Activated naive CD4-positive, alpha-beta T cell treated with anti-CD3 and anti-CD28 coated beads for 36 hours (primary cell): ENCODE measurements at regions of chr4 and their contacts with region 1.

Region 1: DNA sequence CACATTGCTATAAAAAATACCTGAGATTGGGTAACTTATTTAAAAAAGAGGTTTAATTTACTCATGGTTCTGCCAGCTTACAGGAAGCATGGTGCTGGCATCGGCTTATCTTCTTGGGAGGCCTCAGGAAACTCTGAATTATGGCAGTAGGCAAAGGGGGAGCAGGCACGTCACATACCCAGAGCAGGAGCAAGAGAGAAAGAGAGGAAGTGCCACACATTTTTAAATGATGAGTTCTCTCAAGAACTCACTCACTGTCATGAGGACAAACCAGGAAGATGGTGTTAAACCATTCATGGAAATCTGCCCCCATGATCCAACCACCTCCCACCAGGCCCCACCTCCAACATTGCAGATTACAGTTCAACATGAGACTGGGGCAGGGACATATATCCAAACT is 10.0 kb upstream of the AFF1 start:
- DNase-seq: no peak
- H3K4me3 Mint-ChIP-seq: no peak overlapping the region
- H3K27ac Mint-ChIP-seq: no peak overlapping the region
- H3K4me1 Mint-ChIP-seq: peaks cover 21% of the 10 kb centered on the region
- H3K27me3 Mint-ChIP-seq: no peaks in the 10 kb centered on the region

Region 2: DNA sequence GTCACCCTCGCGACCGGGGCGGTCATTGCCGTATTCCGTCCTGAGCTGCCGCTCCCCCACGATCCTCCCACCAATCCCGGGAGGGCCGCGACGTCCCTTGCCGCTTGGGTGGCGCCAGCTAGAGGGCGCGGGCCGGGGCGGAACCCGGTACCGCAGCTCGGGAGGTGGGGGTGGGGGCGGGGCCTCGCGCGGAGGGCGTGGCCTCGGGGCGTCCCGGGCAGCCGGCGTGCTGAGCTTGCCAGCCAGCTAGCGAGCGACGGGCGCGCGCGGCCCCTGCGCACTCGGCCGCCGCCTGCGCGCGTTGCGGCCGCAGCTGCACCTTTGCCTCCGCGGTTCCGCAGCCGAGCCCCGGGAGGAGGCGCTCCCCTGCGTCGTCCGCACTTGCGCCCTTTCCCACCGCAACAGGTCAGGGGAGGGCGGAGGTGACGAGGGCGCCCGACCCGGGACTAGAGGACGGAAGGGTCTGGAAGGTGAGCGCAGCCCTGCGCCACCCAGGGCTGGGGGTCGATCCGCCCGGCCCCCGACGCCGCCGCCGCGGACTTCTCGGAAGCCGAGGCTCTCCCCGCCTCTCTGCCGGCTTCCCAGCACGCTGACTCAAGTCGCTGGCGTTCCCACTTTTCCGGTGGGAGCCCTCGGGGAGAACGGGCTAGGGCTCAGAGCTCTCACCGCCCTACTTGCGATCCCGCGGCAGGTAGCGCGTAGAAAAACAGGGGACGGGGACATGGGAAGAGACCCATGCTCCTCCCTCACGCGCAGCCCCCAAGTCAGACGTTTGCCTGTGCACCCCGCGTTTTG is 10.2 kb after region 1 on chr4 and contains the start of gene AFF1:
- CTCF ChIA-PET with region 1: interaction called, 19 read pairs
- intact Hi-C with region 1: no loop called
- DNase-seq: peak; percentile 89
- H3K4me3 Mint-ChIP-seq: peak within 1 kb of the TSS; percentile 87
- H3K27ac Mint-ChIP-seq: peak within 1 kb of the TSS; percentile 92
- H3K4me1 Mint-ChIP-seq: peaks cover 40% of the 10 kb centered on the region
- H3K27me3 Mint-ChIP-seq: no peaks in the 10 kb centered on the region
- total RNA-seq, gene AFF1: 46.6 to 50.6 TPM

Region 3: GRCh38 chr4:87073199-87074120 is 148.6 kb after region 1 on chr4:
- CTCF ChIA-PET with region 1: interaction called, 11 read pairs
- intact Hi-C with region 1: no loop called
- DNase-seq: peak; percentile 77
- H3K4me3 Mint-ChIP-seq: peak overlapping the region; percentile 55
- H3K27ac Mint-ChIP-seq: peak overlapping the region; percentile 67
- H3K4me1 Mint-ChIP-seq: peaks cover 44% of the 10 kb centered on the region
- H3K27me3 Mint-ChIP-seq: no peaks in the 10 kb centered on the region

Region 4: GRCh38 chr4:87103691-87104187 is 178.9 kb after region 1 on chr4:
- CTCF ChIA-PET with region 1: interaction called, 36 read pairs
- intact Hi-C with region 1: no loop called
- DNase-seq: no peak
- H3K4me3 Mint-ChIP-seq: peak overlapping the region; percentile 3
- H3K27ac Mint-ChIP-seq: peak overlapping the region; percentile 92
- H3K4me1 Mint-ChIP-seq: peaks cover 62% of the 10 kb centered on the region
- H3K27me3 Mint-ChIP-seq: no peaks in the 10 kb centered on the region

Region 5: DNA sequence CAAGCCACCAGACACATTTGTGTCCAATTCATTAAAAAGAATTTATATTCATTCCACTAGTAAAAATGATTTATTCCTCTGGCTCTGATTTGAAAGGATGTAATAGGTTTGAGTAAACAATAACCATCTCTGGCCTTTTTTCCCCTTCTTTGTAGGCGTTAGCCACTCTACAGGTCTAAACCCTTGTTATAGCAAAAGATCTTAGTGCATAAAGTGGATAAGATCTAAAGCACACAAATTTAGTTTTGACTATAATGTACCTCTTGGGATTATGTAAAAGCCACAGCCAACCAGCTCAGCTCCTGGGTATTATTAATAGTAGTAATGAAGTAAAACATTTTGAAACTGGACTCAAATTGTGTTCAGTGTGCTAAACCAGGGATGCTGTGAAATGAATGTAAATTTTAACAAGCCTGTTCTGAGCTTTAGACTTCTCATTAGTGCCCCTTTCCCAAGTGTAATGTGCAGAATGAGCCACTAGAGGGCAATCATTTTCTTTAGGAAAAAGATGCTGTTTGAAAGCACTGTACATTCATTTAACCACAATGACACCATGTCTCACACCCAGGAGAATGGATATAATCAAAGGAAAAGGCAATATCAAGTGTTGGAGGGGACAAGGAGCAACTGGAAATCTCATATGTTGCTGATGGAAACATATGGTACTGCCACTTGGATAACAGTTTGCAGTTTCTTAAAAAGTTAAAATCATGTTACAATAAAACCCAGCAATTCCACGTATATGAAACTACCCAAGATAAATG is 225.9 kb after region 1 on chr4:
- CTCF ChIA-PET with region 1: interaction called, 29 read pairs
- intact Hi-C with region 1: loop called (anchors 1 kb)
- DNase-seq: peak; percentile 67
- H3K4me3 Mint-ChIP-seq: no peak overlapping the region
- H3K27ac Mint-ChIP-seq: no peak overlapping the region
- H3K4me1 Mint-ChIP-seq: no peaks in the 10 kb centered on the region
- H3K27me3 Mint-ChIP-seq: no peaks in the 10 kb centered on the region

Region 6: GRCh38 chr4:87235020-87235671 is 310.3 kb after region 1 on chr4:
- CTCF ChIA-PET with region 1: interaction called, 12 read pairs
- intact Hi-C with region 1: loop called (anchors 1 kb)
- DNase-seq: no peak
- H3K4me3 Mint-ChIP-seq: no peak overlapping the region
- H3K27ac Mint-ChIP-seq: no peak overlapping the region
- H3K4me1 Mint-ChIP-seq: no peaks in the 10 kb centered on the region
- H3K27me3 Mint-ChIP-seq: peaks cover 2% of the 10 kb centered on the region